ENCODE measurements at regions of chr6 and their contacts with region 1.

Region 1: DNA sequence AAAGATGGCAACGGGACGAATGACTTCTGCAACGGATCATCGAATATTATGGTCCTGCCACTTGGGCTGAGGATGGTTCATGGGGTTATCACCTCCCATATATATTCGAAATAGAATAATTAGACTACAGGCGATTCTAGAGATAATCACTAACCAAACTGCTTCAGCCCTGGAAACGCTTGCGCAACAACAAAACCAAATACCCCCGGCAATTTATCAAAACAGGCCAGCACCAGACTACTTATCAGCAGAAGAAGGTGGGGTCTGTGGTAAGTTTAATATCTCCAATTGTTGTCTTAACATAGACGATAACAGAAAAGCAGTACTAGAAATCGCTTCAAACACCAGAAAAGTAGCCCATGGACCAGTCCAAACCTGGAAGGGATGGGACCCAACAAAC is 31.0 kb upstream of the ULBP3 start:
- DNase-seq: no peak
- H3K4me3 ChIP-seq: no peak overlapping the region
- H3K27ac ChIP-seq: no peak overlapping the region
- H3K4me1 ChIP-seq: no peaks in the 10 kb centered on the region
- H3K27me3 ChIP-seq: peaks cover 8% of the 10 kb centered on the region
- CTCF ChIP-seq: no peak
- EP300 ChIP-seq: no peak
- POLR2A ChIP-seq: no peak

Region 2: DNA sequence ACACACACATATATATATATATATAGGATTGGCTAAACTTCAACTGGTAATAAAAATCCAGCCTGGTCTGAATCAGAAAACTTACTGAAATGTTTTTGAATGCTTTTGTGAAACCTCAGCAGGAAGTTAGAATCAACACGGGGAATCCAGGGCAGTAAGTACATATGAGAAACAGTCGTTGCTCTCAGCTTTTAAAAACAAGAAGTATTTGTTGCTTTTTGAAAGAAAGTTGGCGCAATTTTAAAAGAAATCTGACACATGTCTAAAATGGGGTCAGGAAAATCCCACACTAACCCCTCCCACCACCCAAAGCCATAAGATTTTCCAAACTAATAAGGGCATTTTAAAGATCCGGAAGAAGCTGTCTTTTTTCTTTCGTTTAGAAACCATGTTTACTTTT is 1382.3 kb after region 1 on chr6:
- in situ Hi-C with region 1: no loop called
- intact Hi-C with region 1: loop called (anchors 5 kb)
- DNase-seq: no peak
- H3K4me3 ChIP-seq: no peak overlapping the region
- H3K27ac ChIP-seq: peak overlapping the region; percentile 13 to 46 (median 36)
- H3K4me1 ChIP-seq: peaks cover 0 to 7% (median 0%) of the 10 kb centered on the region in 4 donors
- H3K27me3 ChIP-seq: no peaks in the 10 kb centered on the region
- CTCF ChIP-seq: no peak
- EP300 ChIP-seq: no peak
- POLR2A ChIP-seq: no peak

Measured in transverse colon (tissue), 4 donors.